ENCODE measurements at regions of chr4 and their contacts with region 1.

Region 1: GRCh38 chr4:23877758-23878229 is 12.1 kb downstream of the PPARGC1A start:
- DNase-seq: peak in 1 of 5 donors; percentile 41
- ATAC-seq: peak; percentile 68 to 84 (median 77)
- H3K4me3 ChIP-seq: peak overlapping the region in 1 of 12 donors; percentile 9
- H3K27ac ChIP-seq: peak overlapping the region; percentile 44 to 94 (median 76)
- H3K4me1 ChIP-seq: peaks cover 0 to 86% (median 13%) of the 10 kb centered on the region in 12 donors
- H3K27me3 ChIP-seq: no peaks in the 10 kb centered on the region
- CTCF ChIP-seq: no peak
- POLR2A ChIP-seq: no peak

Region 2: DNA sequence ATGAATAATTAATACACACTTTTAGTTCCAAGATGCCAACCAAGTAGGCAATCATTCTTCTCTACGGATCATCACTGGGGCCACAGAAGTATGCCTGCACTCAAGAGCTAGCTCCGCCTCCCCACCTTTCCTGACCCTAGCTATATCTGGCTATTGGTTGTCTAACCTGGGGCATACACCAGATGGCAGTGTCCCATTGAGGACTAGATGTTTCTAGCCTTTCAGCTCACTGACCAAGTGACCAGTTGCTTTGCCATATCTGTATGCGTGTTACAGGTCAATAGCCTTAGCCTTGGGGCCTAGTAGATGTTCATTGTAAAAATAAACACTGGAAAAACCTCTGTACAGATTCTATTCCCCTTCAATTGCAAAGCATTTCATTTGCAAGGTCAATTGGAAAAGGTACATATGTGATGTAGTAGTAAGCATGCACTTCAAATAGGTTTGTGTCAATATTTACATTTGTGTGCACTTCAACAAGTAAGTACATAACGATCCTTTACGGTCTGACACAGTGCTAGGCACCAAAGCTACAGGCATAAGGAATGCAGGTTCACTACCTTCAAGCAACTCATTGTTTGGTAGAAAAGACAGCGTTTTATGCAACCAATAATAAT is 509.6 kb before region 1 on chr4:
- intact Hi-C with region 1: loop called in 1 of 10 experiments (anchors 5 kb)
- DNase-seq: peak in 4 of 5 donors; percentile 22 to 60 (median 43)
- ATAC-seq: peak; percentile 64 to 87 (median 85)
- H3K4me3 ChIP-seq: no peak overlapping the region
- H3K27ac ChIP-seq: peak overlapping the region in 2 of 12 donors; percentile 8 to 50
- H3K4me1 ChIP-seq: peaks cover 0 to 23% (median 2%) of the 10 kb centered on the region in 12 donors
- H3K27me3 ChIP-seq: no peaks in the 10 kb centered on the region
- CTCF ChIP-seq: peak in 11 of 12 donors; percentile 36 to 67 (median 50)
- POLR2A ChIP-seq: no peak

Region 3: GRCh38 chr4:23782778-23783437 is 94.9 kb before region 1 on chr4:
- intact Hi-C with region 1: loop called in 1 of 10 experiments (anchors 5 kb)
- DNase-seq: no peak
- ATAC-seq: no peak
- H3K4me3 ChIP-seq: no peak overlapping the region
- H3K27ac ChIP-seq: no peak overlapping the region
- H3K4me1 ChIP-seq: no peaks in the 10 kb centered on the region
- H3K27me3 ChIP-seq: no peaks in the 10 kb centered on the region
- CTCF ChIP-seq: no peak
- POLR2A ChIP-seq: no peak

Region 4: DNA sequence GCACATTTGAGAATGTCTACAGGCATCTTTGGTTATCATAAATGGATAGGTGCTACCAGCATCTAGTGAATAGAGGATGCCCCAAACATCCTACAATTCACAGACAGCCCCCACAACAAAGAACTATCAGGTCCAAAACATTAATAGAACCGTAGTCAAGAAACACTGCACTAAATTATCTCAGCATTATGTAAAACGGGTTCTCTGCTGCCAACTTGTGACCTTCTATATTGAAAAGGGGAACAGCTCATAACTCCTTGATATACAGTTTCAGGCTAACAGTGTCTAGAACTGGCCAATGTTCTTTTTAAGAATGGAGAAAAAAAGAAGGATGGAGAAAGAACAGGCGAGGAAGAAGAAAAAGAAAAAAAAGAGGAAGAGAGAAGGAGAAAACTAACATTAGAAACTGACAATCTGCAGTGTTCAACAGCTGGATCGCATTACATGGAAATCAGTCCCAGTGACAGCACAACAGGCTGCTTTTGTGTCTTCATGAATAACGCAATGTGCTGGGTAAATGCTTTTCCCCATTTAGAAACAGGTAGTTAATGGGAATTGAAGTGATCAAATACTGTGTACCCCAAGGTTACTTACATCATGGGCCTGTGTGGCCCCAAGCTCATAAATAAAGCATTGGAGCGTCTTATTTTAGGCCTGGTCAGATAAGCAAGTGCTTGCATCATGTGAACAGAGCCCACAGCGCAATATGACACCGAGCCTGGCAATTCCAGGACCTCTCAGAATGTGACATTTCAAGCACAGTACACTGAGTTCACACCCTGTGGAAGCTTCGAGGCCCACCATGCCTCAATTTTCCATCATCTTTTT is 367.1 kb after region 1 on chr4:
- intact Hi-C with region 1: loop called in 2 of 10 experiments (anchors 2 to 5 kb)
- DNase-seq: peak; percentile 60 to 89 (median 76)
- ATAC-seq: peak; percentile 94 to 96 (median 96)
- H3K4me3 ChIP-seq: no peak overlapping the region
- H3K27ac ChIP-seq: peak overlapping the region; percentile 56 to 94 (median 82)
- H3K4me1 ChIP-seq: peaks cover 5 to 71% (median 32%) of the 10 kb centered on the region in 12 donors
- H3K27me3 ChIP-seq: no peaks in the 10 kb centered on the region
- CTCF ChIP-seq: no peak
- POLR2A ChIP-seq: no peak

Region 5: GRCh38 chr4:24249984-24250383 is 372.2 kb after region 1 on chr4:
- intact Hi-C with region 1: loop called in 2 of 10 experiments (anchors 2 to 5 kb)
- DNase-seq: no peak
- ATAC-seq: no peak
- H3K4me3 ChIP-seq: no peak overlapping the region
- H3K27ac ChIP-seq: peak overlapping the region in 7 of 12 donors; percentile 73 to 88 (median 81)
- H3K4me1 ChIP-seq: peaks cover 5 to 52% (median 17%) of the 10 kb centered on the region in 12 donors
- H3K27me3 ChIP-seq: no peaks in the 10 kb centered on the region
- CTCF ChIP-seq: no peak
- POLR2A ChIP-seq: no peak

Measured in heart left ventricle (tissue), 16 donors.